ENCODE measurements at regions of chr1 and their contacts with region 1.

Region 1: DNA sequence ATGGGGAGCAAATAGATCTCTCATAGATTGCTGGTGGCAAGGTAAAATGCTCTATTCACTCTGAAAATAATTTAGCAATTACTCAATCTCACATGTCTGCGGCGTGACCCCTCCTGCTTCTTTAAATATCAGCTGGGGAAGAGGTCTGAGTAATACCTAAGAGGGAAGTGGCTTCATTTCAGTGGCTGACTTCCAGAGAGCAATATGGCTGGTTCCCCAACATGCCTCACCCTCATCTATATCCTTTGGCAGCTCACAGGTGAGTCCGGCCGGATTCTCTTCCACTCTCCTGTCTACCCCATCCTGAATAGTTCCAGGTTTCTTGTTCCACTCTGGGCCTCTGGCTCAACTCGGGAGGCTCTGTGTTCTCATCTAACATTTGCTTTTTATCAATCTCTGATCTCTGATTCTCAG is at the start of gene SLAMF7:
- DNase-seq: peak; percentile 81
- ATAC-seq: peak; percentile 72
- H3K4me3 ChIP-seq: peak within 1 kb of the TSS; percentile 99
- H3K27ac ChIP-seq: peak within 1 kb of the TSS; percentile 78
- H3K4me1 ChIP-seq: peaks cover 34% of the 10 kb centered on the region
- H3K27me3 ChIP-seq: no peaks in the 10 kb centered on the region
- CTCF ChIP-seq: no peak
- EP300 ChIP-seq: peak; percentile 38 to 45; a peak in 2 of 4 replicates
- POLR2A ChIP-seq: peak; percentile 88
- RAD21 ChIP-seq: no peak
- polyA plus RNA-seq, gene SLAMF7: 66.6 to 83.4 TPM

Region 2: DNA sequence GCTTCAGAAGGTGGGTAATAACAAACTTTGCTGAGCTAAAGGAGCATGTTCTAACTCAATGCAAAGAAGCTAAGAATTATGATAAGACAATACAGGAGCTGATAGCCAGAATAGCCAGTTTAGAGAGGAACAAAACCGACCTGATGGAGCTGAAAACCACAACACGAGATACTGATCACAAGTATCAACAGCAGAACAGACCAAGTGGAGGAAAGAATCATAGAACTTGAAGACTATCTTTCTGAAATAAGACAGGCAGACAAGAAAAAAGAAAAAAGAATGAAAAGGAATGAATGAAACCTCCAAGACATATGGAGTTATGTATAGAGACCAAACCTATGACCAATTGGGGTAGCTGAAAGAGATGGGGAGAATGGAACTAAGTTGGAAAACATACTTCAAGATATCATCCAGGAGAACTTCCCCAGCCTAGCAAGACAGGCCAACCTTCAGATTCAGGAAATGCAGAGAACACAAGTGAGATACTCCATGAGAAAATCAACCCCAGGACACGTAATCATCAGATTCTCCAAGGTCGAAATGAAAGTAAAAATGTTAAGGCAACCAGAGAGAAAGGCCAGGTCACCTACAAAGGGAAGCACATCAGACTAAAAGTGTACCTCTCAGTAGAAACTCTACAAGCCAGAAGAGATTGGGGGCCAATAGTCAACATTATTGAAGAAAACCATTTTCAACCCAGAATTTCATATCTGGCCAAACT is 180.3 kb before region 1 on chr1:
- CTCF ChIA-PET with region 1: no interaction called
- POLR2A ChIA-PET with region 1: no interaction called
- RAD21 ChIA-PET with region 1: no interaction called
- SMC1A ChIA-PET with region 1: no interaction called
- in situ Hi-C with region 1: no loop called
- intact Hi-C with region 1: no loop called
- DNase-seq: no peak
- ATAC-seq: no peak
- H3K4me3 ChIP-seq: 0 out of 2 replicates have a peak overlapping the region, but pooled peaks have one; percentile 31
- H3K27ac ChIP-seq: peak overlapping the region; percentile 64
- H3K4me1 ChIP-seq: no peaks in the 10 kb centered on the region; the same call in 1 of the 2 replicates
- H3K27me3 ChIP-seq: no peaks in the 10 kb centered on the region
- CTCF ChIP-seq: no peak
- EP300 ChIP-seq: no peak
- POLR2A ChIP-seq: no peak
- RAD21 ChIP-seq: no peak

Region 3: GRCh38 chr1:160629286-160630210 is 109.6 kb before region 1 on chr1:
- CTCF ChIA-PET with region 1: interaction called, 4 read pairs
- POLR2A ChIA-PET with region 1: interaction called, 10 read pairs
- RAD21 ChIA-PET with region 1: interaction called, 3 read pairs
- SMC1A ChIA-PET with region 1: interaction called, 3 read pairs
- in situ Hi-C with region 1: no loop called
- intact Hi-C with region 1: no loop called
- DNase-seq: no peak
- ATAC-seq: no peak
- H3K4me3 ChIP-seq: peak overlapping the region; percentile 3; the same call in 1 of the 2 replicates
- H3K27ac ChIP-seq: peak overlapping the region; percentile 30
- H3K4me1 ChIP-seq: peaks cover 69% of the 10 kb centered on the region
- H3K27me3 ChIP-seq: no peaks in the 10 kb centered on the region
- CTCF ChIP-seq: no peak
- EP300 ChIP-seq: no peak
- POLR2A ChIP-seq: peak; percentile 46
- RAD21 ChIP-seq: no peak

Region 4: GRCh38 chr1:160726498-160727315 is 12.4 kb before region 1 on chr1:
- CTCF ChIA-PET with region 1: interaction called, 136 read pairs
- POLR2A ChIA-PET with region 1: interaction called, 65 read pairs
- RAD21 ChIA-PET with region 1: interaction called, 65 read pairs
- SMC1A ChIA-PET with region 1: interaction called, 189 read pairs
- in situ Hi-C with region 1: no loop called
- intact Hi-C with region 1: loop called (anchors 1 kb)
- DNase-seq: no peak
- ATAC-seq: peak; percentile 80
- H3K4me3 ChIP-seq: no peak overlapping the region
- H3K27ac ChIP-seq: peak overlapping the region; percentile 85
- H3K4me1 ChIP-seq: peaks cover 40% of the 10 kb centered on the region
- H3K27me3 ChIP-seq: no peaks in the 10 kb centered on the region
- CTCF ChIP-seq: peak; percentile 81 to 92 (median 91); a peak in 5 of 6 replicates
- EP300 ChIP-seq: no peak
- POLR2A ChIP-seq: no peak
- RAD21 ChIP-seq: peak; percentile 99

Region 5: DNA sequence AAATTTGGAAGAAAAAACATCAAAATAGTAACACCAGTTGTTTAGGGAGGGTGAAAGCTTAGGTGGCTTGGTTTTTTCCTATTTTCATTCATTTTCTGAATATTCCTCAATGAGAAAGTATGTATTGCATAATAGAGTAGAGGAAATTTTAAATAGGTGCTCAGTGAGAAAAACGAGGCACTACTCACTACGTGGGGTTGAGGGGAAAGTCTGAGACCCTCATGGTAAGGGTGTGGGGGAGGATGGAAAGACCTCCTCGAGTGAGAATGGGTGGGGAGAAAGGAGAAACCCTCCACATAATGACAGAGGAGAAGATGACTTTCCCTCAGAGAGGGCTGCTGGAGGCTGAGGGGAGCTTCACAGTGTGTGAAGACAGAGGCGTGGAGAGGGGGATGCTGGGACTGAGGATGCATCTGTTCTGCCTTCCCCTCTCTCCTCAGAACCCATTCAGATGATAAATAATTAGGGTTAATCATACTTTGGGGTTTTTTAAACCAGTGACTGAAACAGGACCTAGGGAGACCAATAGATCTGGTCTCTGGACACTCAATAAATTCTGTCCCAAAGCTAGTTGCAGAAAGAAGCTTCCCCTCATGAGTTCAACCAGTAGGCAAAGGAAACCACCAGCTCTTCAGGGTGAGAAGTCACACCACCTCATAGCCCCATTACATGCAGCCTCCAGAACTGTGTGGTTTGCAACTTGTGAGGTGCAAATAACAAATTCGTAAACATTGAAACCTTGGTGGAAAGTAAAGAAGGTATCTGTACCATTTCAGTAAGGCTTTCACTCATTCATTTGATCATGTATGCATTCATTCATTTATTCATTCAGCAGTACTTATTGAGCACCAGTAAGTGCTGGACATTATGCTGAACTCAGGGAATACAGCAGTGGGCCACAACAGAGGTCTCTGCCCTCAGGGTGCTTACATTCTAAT is 17.1 kb after region 1 on chr1:
- CTCF ChIA-PET with region 1: interaction called, 9 read pairs
- POLR2A ChIA-PET with region 1: interaction called, 19 read pairs
- RAD21 ChIA-PET with region 1: interaction called, 68 read pairs
- SMC1A ChIA-PET with region 1: interaction called, 61 read pairs
- in situ Hi-C with region 1: no loop called
- intact Hi-C with region 1: no loop called
- DNase-seq: no peak
- ATAC-seq: peak; percentile 77
- H3K4me3 ChIP-seq: no peak overlapping the region
- H3K27ac ChIP-seq: peak overlapping the region; percentile 49
- H3K4me1 ChIP-seq: peaks cover 20% of the 10 kb centered on the region
- H3K27me3 ChIP-seq: no peaks in the 10 kb centered on the region
- CTCF ChIP-seq: no peak
- EP300 ChIP-seq: peak; percentile 32 to 43; a peak in 1 of 4 replicates
- POLR2A ChIP-seq: peak; percentile 44; the same call in 1 of the 2 replicates
- RAD21 ChIP-seq: no peak

Region 6: GRCh38 chr1:160789702-160790611 is 50.9 kb after region 1 on chr1:
- CTCF ChIA-PET with region 1: interaction called, 9 read pairs
- POLR2A ChIA-PET with region 1: interaction called, 6 read pairs
- RAD21 ChIA-PET with region 1: interaction called, 15 read pairs
- SMC1A ChIA-PET with region 1: interaction called, 6 read pairs
- in situ Hi-C with region 1: no loop called
- intact Hi-C with region 1: no loop called
- DNase-seq: peak; percentile 89
- ATAC-seq: peak; percentile 91
- H3K4me3 ChIP-seq: no peak overlapping the region; the same call in 1 of the 2 replicates
- H3K27ac ChIP-seq: peak overlapping the region; percentile 86
- H3K4me1 ChIP-seq: peaks cover 19% of the 10 kb centered on the region
- H3K27me3 ChIP-seq: no peaks in the 10 kb centered on the region
- CTCF ChIP-seq: no peak
- EP300 ChIP-seq: peak; percentile 96 to 99
- POLR2A ChIP-seq: no peak
- RAD21 ChIP-seq: no peak

Region 7: GRCh38 chr1:160795951-160796383 is 56.9 kb after region 1 on chr1 and contains the start of gene LY9:
- CTCF ChIA-PET with region 1: interaction called, 9 read pairs
- POLR2A ChIA-PET with region 1: interaction called, 3 read pairs
- RAD21 ChIA-PET with region 1: interaction called, 15 read pairs
- SMC1A ChIA-PET with region 1: interaction called, 17 read pairs
- in situ Hi-C with region 1: no loop called
- intact Hi-C with region 1: no loop called
- DNase-seq: peak; percentile 97
- ATAC-seq: peak; percentile 79
- H3K4me3 ChIP-seq: peak within 1 kb of the TSS; percentile 63
- H3K27ac ChIP-seq: peak within 1 kb of the TSS; percentile 78
- H3K4me1 ChIP-seq: peaks cover 42% of the 10 kb centered on the region
- H3K27me3 ChIP-seq: no peaks in the 10 kb centered on the region
- CTCF ChIP-seq: no peak
- EP300 ChIP-seq: peak; percentile 96 to 98
- POLR2A ChIP-seq: peak; percentile 66
- RAD21 ChIP-seq: no peak
- polyA plus RNA-seq, gene LY9: 2.7 to 2.8 TPM

Region 8: GRCh38 chr1:161082991-161083742 is 344.1 kb after region 1 on chr1:
- CTCF ChIA-PET with region 1: no interaction called
- POLR2A ChIA-PET with region 1: no interaction called
- RAD21 ChIA-PET with region 1: no interaction called
- SMC1A ChIA-PET with region 1: no interaction called
- in situ Hi-C with region 1: no loop called
- intact Hi-C with region 1: no loop called
- DNase-seq: no peak
- ATAC-seq: peak; percentile 55
- H3K4me3 ChIP-seq: no peak overlapping the region
- H3K27ac ChIP-seq: no peak overlapping the region
- H3K4me1 ChIP-seq: no peaks in the 10 kb centered on the region; the same call in 1 of the 2 replicates
- H3K27me3 ChIP-seq: no peaks in the 10 kb centered on the region
- CTCF ChIP-seq: no peak
- EP300 ChIP-seq: no peak
- POLR2A ChIP-seq: no peak
- RAD21 ChIP-seq: no peak